ENCODE measurements at regions of chr21 and their contacts with region 1.

Region 1: GRCh38 chr21:37711836-37712568 is 204.3 kb downstream of the KCNJ6 start:
- DNase-seq: peak; percentile 30
- H3K4me3 ChIP-seq: no peak overlapping the region
- H3K27ac ChIP-seq: no peak overlapping the region
- H3K27me3 ChIP-seq: peaks cover 7% of the 10 kb centered on the region
- CTCF ChIP-seq: peak; percentile 99

Region 2: DNA sequence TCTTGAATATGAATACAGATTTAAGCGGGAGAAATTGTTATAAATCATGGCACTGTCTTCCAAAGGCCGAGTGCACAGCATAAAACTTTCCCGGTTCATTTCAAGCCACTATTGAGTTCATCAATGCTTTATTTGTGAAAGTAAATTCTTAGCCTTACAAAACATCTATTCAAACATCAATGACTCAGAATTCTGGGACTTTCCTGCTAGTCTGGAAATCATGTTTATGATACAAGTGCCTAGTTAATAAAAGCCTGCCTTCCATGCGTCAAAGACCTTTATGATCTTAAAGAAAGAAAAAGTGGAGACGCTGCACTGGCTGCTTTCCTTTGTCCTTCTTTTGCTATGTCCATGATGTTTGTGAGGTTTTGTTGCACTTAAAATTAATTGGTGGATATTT is 1789.4 kb before region 1 on chr21:
- CTCF ChIA-PET with region 1: no interaction called
- POLR2A ChIA-PET with region 1: no interaction called
- DNase-seq: no peak
- H3K4me3 ChIP-seq: no peak overlapping the region
- H3K27ac ChIP-seq: peak overlapping the region; percentile 49
- H3K27me3 ChIP-seq: no peaks in the 10 kb centered on the region
- CTCF ChIP-seq: no peak

Region 3: DNA sequence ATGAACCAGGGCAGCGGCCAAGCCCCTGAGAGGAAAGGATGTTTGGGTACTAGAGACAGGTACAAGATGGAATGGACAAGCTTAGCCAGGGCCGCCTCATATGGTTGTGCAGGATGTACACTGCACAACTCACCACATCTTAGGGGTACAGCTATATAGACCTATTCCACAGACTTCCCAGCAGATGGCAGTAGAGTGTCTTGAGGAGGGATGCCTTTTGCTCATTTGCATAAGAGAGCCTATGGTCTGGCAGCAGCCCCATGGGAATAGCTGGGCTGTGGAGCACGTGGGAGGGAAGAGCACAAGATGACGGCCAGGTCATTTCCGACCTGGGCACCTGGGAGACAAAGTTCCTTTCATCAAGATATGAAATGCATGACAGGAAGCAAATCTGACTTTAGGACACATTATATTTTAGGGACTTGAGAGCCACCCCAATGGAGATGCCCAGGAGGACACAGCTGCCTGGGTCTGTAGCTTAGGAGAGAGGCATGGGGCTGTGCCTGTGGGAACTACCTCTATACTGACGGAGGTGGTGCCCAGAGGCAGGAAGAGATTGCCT is 11.3 kb before region 1 on chr21:
- CTCF ChIA-PET with region 1: interaction called, 43 read pairs
- POLR2A ChIA-PET with region 1: no interaction called
- DNase-seq: peak; percentile 61
- H3K4me3 ChIP-seq: no peak overlapping the region
- H3K27ac ChIP-seq: no peak overlapping the region
- H3K27me3 ChIP-seq: peaks cover 22% of the 10 kb centered on the region
- CTCF ChIP-seq: peak; percentile 86

Region 4: DNA sequence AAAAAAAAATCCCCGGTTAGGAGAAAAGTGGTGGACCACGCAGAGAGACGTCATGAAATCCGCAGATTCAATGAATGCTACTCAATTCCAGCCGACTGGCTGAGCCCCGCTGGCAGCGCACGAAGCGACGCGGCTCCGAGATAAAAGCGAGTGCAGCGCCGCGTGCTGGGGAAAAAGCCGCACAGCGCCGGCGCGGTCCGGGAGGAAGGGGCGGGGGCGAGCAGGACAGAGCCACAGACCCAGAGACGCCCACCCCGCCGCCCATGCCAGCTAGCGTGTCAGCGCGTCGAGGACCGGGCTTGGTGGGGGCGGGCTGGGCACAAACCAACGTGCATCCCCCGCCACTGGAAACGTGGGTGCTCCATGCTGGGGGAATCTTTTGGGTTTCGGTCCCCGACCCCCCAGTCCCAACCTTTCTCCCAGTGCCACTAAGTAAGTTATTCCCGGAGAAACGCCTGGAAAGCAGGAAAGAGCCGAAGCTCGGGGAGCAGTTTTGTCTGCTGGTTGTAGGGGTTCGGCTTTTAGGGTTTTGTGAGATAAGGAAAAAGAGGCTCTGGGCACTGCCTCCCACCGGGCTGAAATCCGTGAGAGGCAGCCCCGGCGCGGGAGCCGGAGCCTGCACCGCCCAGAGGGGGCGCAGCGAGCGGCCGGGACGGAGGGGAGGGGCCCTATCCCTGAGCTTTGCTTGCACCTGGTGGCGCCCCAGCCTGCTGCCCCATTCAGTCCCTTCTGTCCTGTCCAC is 204.5 kb after region 1 on chr21 and contains the start of gene KCNJ6:
- CTCF ChIA-PET with region 1: interaction called, 36 read pairs
- POLR2A ChIA-PET with region 1: no interaction called
- DNase-seq: no peak
- H3K4me3 ChIP-seq: peak within 1 kb of the TSS; percentile 41
- H3K27ac ChIP-seq: no peak within 1 kb of the TSS
- H3K27me3 ChIP-seq: peaks cover 45% of the 10 kb centered on the region
- CTCF ChIP-seq: peak; percentile 83
- polyA plus RNA-seq, gene KCNJ6: 0.02 and 0.06 TPM in 2 replicates

Region 5: DNA sequence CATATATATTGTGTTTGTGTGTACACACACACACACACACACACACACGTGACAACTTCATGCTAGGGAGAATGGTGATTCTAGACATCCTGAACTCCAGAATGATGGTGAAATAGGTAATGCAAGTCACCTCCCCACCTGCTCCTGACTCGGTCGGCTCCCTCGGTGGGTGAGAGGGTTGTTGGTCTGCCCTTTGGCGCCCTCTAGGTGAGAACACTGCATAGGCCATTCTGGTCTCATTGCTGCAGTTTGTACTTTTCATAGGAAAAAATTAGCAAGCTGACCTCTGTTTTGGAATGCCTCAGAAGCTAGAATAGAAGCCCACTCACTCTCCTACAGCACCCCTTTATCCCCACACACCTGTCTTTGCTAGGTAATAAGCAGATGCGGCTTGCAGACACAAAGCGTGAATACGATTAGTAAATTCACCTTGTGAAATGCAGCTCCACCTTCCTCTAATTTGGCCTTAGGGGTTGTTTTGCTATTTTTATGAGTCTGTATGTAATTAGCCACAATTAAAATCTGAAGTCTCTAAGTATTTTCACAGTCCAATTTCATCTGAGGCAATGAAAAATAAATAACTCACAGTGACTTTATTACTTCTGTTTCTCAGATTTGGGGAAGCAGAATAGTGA is 414.8 kb after region 1 on chr21:
- CTCF ChIA-PET with region 1: interaction called, 18 read pairs
- POLR2A ChIA-PET with region 1: no interaction called
- DNase-seq: no peak
- H3K4me3 ChIP-seq: no peak overlapping the region
- H3K27ac ChIP-seq: no peak overlapping the region
- H3K27me3 ChIP-seq: peaks cover 16% of the 10 kb centered on the region
- CTCF ChIP-seq: peak; percentile 85